CD8-positive, alpha-beta memory T cell (primary cell): ENCODE measurements at regions of chr12 and their contacts with region 1.

Region 1: GRCh38 chr12:47361389-47362021 is 281.7 kb upstream of the AMIGO2 start:
- DNase-seq: peak; percentile 11 to 50 (median 30)
- H3K4me3 ChIP-seq: peak overlapping the region; percentile 58
- H3K4me3 Mint-ChIP-seq: peak overlapping the region; percentile 75 to 95 (median 85)
- H3K27ac ChIP-seq: peak overlapping the region; percentile 76
- H3K27ac Mint-ChIP-seq: peak overlapping the region; percentile 93 to 100 (median 97)
- H3K4me1 ChIP-seq: peaks cover 67% of the 10 kb centered on the region
- H3K4me1 Mint-ChIP-seq: peaks cover 57 to 70% (median 60%) of the 10 kb centered on the region in 3 donors
- H3K27me3 ChIP-seq: no peaks in the 10 kb centered on the region
- H3K27me3 Mint-ChIP-seq: peaks cover 0 to 2% of the 10 kb centered on the region in 2 donors

Region 2: DNA sequence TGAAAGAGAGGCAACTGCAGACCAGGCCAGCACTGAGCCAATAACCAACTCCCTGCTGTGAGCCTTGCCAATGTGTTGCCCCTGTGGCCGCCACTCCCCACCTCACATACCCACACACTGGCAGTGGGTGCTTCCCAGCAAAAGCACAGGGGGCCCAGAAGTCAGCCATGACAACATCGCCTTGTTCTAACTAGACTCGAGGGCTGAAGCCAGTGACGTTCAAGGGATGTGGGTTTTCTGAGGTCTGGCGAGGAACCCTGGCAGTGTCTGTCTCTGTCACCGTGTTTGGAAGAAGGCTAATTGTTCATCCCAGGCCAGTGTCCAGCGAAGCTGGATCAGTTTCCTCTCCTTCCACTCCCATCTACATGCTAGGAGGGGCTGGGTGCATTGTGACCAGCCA is 30.1 kb after region 1 on chr12:
- CTCF ChIA-PET with region 1: interaction called, 15 read pairs
- POLR2A ChIA-PET with region 1: no interaction called
- DNase-seq: peak; percentile 47 to 89 (median 76)
- H3K4me3 ChIP-seq: peak overlapping the region; percentile 20
- H3K4me3 Mint-ChIP-seq: peak overlapping the region; percentile 53 to 84 (median 66)
- H3K27ac ChIP-seq: peak overlapping the region; percentile 55
- H3K27ac Mint-ChIP-seq: peak overlapping the region; percentile 96 to 99 (median 98)
- H3K4me1 ChIP-seq: peaks cover 50% of the 10 kb centered on the region
- H3K4me1 Mint-ChIP-seq: peaks cover 74 to 87% (median 80%) of the 10 kb centered on the region in 3 donors
- H3K27me3 ChIP-seq: no peaks in the 10 kb centered on the region
- H3K27me3 Mint-ChIP-seq: no peaks in the 10 kb centered on the region